Mammary epithelial cell (primary cell): ENCODE measurements at regions of chr15 and their contacts with region 1.

Region 1: GRCh38 chr15:63178030-63178429 is 11.4 kb upstream of the RAB8B start:
- DNase-seq: no peak
- H3K4me3 ChIP-seq: no peak overlapping the region
- H3K27ac ChIP-seq: no peak overlapping the region
- H3K4me1 ChIP-seq: peaks cover 13% of the 10 kb centered on the region
- H3K27me3 ChIP-seq: no peaks in the 10 kb centered on the region
- CTCF ChIP-seq: no peak

Region 2: GRCh38 chr15:63122002-63122893 is 55.8 kb before region 1 on chr15:
- CTCF ChIA-PET with region 1: no interaction called
- dilution Hi-C with region 1: loop called (anchors 5 kb)
- in situ Hi-C with region 1: no loop called
- intact Hi-C with region 1: no loop called
- DNase-seq: peak; percentile 87
- H3K4me3 ChIP-seq: peak overlapping the region; percentile 81 to 99 (median 96)
- H3K27ac ChIP-seq: peak overlapping the region; percentile 70
- H3K4me1 ChIP-seq: no peaks in the 10 kb centered on the region
- H3K27me3 ChIP-seq: no peaks in the 10 kb centered on the region
- CTCF ChIP-seq: peak in 1 of 2 donors; percentile 27